CD4-positive, alpha-beta memory T cell (primary cell): ENCODE measurements at regions of chr2 and their contacts with region 1.

Region 1: GRCh38 chr2:96960153-96960961 is 26.0 kb downstream of the FAM178B start:
- DNase-seq: peak; percentile 75 to 77 (median 76)
- H3K4me3 ChIP-seq: no peak overlapping the region
- H3K4me3 Mint-ChIP-seq: peak overlapping the region; percentile 49 to 78 (median 74)
- H3K27ac ChIP-seq: peak overlapping the region; percentile 58
- H3K27ac Mint-ChIP-seq: peak overlapping the region; percentile 91 to 99 (median 97)
- H3K4me1 ChIP-seq: peaks cover 58% of the 10 kb centered on the region
- H3K4me1 Mint-ChIP-seq: peaks cover 39 to 61% (median 50%) of the 10 kb centered on the region in 4 donors
- H3K27me3 ChIP-seq: no peaks in the 10 kb centered on the region
- H3K27me3 Mint-ChIP-seq: no peaks in the 10 kb centered on the region

Region 2: GRCh38 chr2:96344011-96344410 is 616.3 kb before region 1 on chr2:
- CTCF ChIA-PET with region 1: no interaction called
- POLR2A ChIA-PET with region 1: no interaction called
- intact Hi-C with region 1: no loop called
- DNase-seq: peak; percentile 67 to 84 (median 72)
- H3K4me3 ChIP-seq: no peak overlapping the region
- H3K4me3 Mint-ChIP-seq: peak overlapping the region in 7 of 8 donors; percentile 15 to 81 (median 53)
- H3K27ac ChIP-seq: peak overlapping the region; percentile 68
- H3K27ac Mint-ChIP-seq: peak overlapping the region; percentile 82 to 96 (median 92)
- H3K4me1 ChIP-seq: peaks cover 55% of the 10 kb centered on the region
- H3K4me1 Mint-ChIP-seq: peaks cover 41 to 61% (median 47%) of the 10 kb centered on the region in 4 donors
- H3K27me3 ChIP-seq: no peaks in the 10 kb centered on the region
- H3K27me3 Mint-ChIP-seq: no peaks in the 10 kb centered on the region

Region 3: GRCh38 chr2:96407041-96407918 is 553.1 kb before region 1 on chr2:
- CTCF ChIA-PET with region 1: no interaction called
- POLR2A ChIA-PET with region 1: interaction called, 7 read pairs
- intact Hi-C with region 1: loop called (anchors 2 kb)
- DNase-seq: peak; percentile 86 to 89 (median 88)
- H3K4me3 ChIP-seq: peak overlapping the region; percentile 14 to 21
- H3K4me3 Mint-ChIP-seq: peak overlapping the region; percentile 64 to 91 (median 86)
- H3K27ac ChIP-seq: peak overlapping the region; percentile 39
- H3K27ac Mint-ChIP-seq: peak overlapping the region; percentile 81 to 99 (median 97)
- H3K4me1 ChIP-seq: peaks cover 34% of the 10 kb centered on the region
- H3K4me1 Mint-ChIP-seq: peaks cover 22 to 39% (median 32%) of the 10 kb centered on the region in 4 donors
- H3K27me3 ChIP-seq: no peaks in the 10 kb centered on the region
- H3K27me3 Mint-ChIP-seq: no peaks in the 10 kb centered on the region

Region 4: DNA sequence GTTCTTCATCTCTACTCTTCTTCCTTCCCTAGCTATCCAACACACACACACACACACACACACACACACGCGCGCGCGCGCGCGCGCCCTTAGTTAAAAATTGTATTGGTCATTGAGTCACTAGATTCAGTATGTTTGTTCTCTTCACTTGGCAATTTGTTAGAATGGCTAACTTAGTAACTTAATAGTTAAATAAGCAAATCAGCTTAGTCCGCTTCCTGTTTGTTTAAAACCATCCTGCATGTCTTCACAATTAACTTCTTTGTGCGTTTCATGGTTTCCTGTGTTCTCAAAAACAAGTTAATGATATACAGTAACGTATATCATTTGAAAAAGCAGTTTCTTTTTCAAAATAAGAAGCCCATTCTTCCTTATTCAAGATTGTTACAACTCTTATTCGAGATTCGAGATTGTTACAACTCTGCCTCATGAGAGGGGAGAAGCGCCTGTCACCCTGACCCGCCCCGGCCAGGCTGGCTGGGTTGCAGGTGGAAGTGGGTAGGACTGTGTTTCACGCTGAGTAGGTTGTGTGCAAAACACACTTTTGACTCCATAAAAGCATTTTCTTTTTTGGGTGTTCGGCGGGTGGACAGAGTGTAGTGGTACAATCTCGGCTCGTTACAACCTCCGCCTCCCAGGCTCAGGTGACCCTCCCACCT is 153.8 kb before region 1 on chr2:
- CTCF ChIA-PET with region 1: interaction called, 4 read pairs
- POLR2A ChIA-PET with region 1: interaction called, 15 read pairs
- intact Hi-C with region 1: no loop called
- DNase-seq: peak; percentile 68 to 82 (median 78)
- H3K4me3 ChIP-seq: peak overlapping the region in 1 of 2 donors; percentile 38
- H3K4me3 Mint-ChIP-seq: peak overlapping the region; percentile 79 to 92 (median 86)
- H3K27ac ChIP-seq: peak overlapping the region; percentile 22
- H3K27ac Mint-ChIP-seq: peak overlapping the region; percentile 91 to 100 (median 98)
- H3K4me1 ChIP-seq: peaks cover 39% of the 10 kb centered on the region
- H3K4me1 Mint-ChIP-seq: peaks cover 16 to 47% (median 27%) of the 10 kb centered on the region in 4 donors
- H3K27me3 ChIP-seq: no peaks in the 10 kb centered on the region
- H3K27me3 Mint-ChIP-seq: no peaks in the 10 kb centered on the region

Region 5: DNA sequence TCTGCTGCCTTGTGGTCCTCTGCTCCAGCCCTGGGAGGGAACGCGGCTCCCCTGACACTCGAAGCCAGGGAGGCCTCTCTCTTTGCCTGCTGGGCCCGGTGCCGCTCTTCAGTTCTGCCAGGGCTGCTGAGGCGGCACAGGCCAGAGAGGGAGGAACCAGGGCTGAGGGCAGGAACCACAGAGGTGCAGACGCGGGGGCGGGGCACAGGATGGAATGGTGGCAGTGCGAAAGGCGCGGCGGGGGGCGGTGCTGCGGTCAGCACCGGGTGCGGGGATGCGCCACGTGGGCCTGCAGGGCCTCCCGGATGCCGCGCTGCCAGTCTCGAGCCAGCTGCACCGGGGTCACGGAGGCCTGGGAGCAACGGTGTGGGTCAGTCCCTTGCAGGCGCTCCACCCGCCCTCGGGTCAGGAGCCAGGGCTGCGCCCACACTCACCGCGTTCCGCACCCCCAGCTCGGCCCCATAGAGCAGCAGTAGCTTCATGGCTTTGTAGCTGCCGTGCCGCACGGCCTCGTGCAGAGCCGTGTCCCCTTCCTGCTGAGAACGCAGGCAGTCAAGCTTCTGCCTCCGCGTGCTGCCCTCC is 121.0 kb before region 1 on chr2:
- CTCF ChIA-PET with region 1: interaction called, 4 read pairs
- POLR2A ChIA-PET with region 1: interaction called, 15 read pairs
- intact Hi-C with region 1: no loop called
- DNase-seq: peak; percentile 84 to 89 (median 85)
- H3K4me3 ChIP-seq: peak overlapping the region in 1 of 2 donors; percentile 33
- H3K4me3 Mint-ChIP-seq: peak overlapping the region; percentile 45 to 80 (median 73)
- H3K27ac ChIP-seq: peak overlapping the region; percentile 55
- H3K27ac Mint-ChIP-seq: peak overlapping the region; percentile 74 to 95 (median 89)
- H3K4me1 ChIP-seq: peaks cover 22% of the 10 kb centered on the region
- H3K4me1 Mint-ChIP-seq: peaks cover 7 to 29% (median 19%) of the 10 kb centered on the region in 4 donors
- H3K27me3 ChIP-seq: no peaks in the 10 kb centered on the region
- H3K27me3 Mint-ChIP-seq: no peaks in the 10 kb centered on the region

Region 6: GRCh38 chr2:96913398-96914202 is 46.8 kb before region 1 on chr2:
- CTCF ChIA-PET with region 1: no interaction called
- POLR2A ChIA-PET with region 1: interaction called, 31 read pairs
- intact Hi-C with region 1: loop called (anchors 5 kb)
- DNase-seq: peak; percentile 62 to 76 (median 67)
- H3K4me3 ChIP-seq: peak overlapping the region; percentile 57 to 76
- H3K4me3 Mint-ChIP-seq: peak overlapping the region; percentile 83 to 93 (median 88)
- H3K27ac ChIP-seq: peak overlapping the region; percentile 54
- H3K27ac Mint-ChIP-seq: peak overlapping the region; percentile 81 to 98 (median 97)
- H3K4me1 ChIP-seq: peaks cover 64% of the 10 kb centered on the region
- H3K4me1 Mint-ChIP-seq: peaks cover 45 to 85% (median 70%) of the 10 kb centered on the region in 4 donors
- H3K27me3 ChIP-seq: no peaks in the 10 kb centered on the region
- H3K27me3 Mint-ChIP-seq: no peaks in the 10 kb centered on the region

Region 7: DNA sequence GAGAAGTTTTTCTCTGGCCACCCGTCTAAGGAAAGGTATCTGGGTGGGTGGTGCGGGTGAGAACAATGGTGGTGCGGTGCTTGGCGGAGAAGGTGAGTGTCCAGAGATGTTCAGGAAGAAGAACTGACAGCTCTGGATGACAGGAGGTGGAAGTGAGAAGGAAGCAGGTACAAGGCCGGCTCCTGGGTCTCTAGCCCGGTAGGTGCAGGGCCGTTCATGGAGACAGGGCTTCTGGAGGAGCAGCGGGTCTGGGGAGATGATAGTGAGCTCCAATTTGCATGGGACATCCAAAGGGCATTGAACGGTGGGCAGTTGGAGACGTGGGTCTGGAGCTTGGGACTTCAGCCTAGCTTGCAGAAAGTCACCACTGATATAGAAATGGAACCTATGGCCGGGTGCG is 135.3 kb after region 1 on chr2:
- CTCF ChIA-PET with region 1: no interaction called
- POLR2A ChIA-PET with region 1: no interaction called
- intact Hi-C with region 1: loop called (anchors 5 kb)
- DNase-seq: no peak
- H3K4me3 ChIP-seq: no peak overlapping the region
- H3K4me3 Mint-ChIP-seq: peak overlapping the region; percentile 36 to 80 (median 76)
- H3K27ac ChIP-seq: no peak overlapping the region
- H3K27ac Mint-ChIP-seq: peak overlapping the region; percentile 20 to 89 (median 83)
- H3K4me1 ChIP-seq: peaks cover 11% of the 10 kb centered on the region
- H3K4me1 Mint-ChIP-seq: peaks cover 5 to 10% (median 8%) of the 10 kb centered on the region in 4 donors
- H3K27me3 ChIP-seq: no peaks in the 10 kb centered on the region
- H3K27me3 Mint-ChIP-seq: peaks cover 5 to 7% of the 10 kb centered on the region in 2 donors

Region 8: DNA sequence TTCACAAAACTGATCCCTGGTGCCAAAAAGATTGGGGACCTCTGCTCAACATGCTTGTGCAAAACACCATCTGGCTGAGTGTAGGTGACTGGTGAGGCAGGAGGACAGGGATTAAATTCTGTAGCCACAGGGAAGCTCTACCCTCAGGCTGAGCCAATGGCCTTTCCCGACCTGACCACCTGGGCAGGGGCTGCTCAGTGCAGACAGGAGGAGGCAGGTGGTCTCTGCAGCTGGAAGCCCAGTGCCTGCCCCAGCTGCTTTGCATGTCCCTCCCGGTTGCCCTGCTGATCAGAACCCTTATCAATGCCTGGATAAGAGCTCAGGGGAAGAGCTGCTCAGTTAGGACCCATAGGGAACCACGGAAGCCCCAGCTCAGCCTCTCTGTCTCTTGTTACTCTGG is 387.9 kb after region 1 on chr2:
- CTCF ChIA-PET with region 1: no interaction called
- POLR2A ChIA-PET with region 1: no interaction called
- intact Hi-C with region 1: no loop called
- DNase-seq: no peak
- H3K4me3 ChIP-seq: no peak overlapping the region
- H3K4me3 Mint-ChIP-seq: no peak overlapping the region
- H3K27ac ChIP-seq: no peak overlapping the region
- H3K27ac Mint-ChIP-seq: no peak overlapping the region
- H3K4me1 ChIP-seq: no peaks in the 10 kb centered on the region
- H3K4me1 Mint-ChIP-seq: no peaks in the 10 kb centered on the region
- H3K27me3 ChIP-seq: no peaks in the 10 kb centered on the region
- H3K27me3 Mint-ChIP-seq: peaks cover 9 to 12% of the 10 kb centered on the region in 2 donors